Cardiac septum (tissue), 1 donor: ENCODE measurements at regions of chr5 and their contacts with region 1.

Region 1: GRCh38 chr5:95846554-95847260 is 24.2 kb upstream of the GLRX start:
- DNase-seq: no peak

Region 2: GRCh38 chr5:95554647-95555548 is 291.8 kb before region 1 on chr5 and contains the starts of genes ARSK and SKIC3:
- intact Hi-C with region 1: loop called (anchors 5 kb)
- DNase-seq: peak; percentile 96
- total RNA-seq, gene ARSK: 2.2 TPM
- total RNA-seq, gene SKIC3: 70.7 TPM

Region 3: DNA sequence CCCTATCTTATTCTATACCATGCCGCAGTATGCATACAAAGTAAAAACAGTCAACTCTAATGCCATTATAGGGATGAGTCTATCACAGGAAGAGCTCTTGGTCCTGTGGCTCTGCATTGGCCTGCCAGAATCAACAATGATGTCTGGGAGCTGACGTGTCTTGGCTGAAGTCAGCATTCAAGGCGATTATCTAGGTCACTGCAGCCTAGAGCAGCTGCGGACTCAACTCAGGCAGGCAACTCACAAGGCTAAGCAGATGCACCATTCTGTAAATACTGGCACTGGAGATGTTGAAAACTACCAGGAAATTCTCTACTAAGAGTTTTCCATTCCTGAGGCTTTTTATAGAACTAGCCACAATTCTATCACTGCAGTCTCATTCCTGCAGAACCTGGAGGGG is 177.2 kb before region 1 on chr5:
- intact Hi-C with region 1: loop called (anchors 5 kb)
- DNase-seq: peak; percentile 80

Region 4: GRCh38 chr5:95730730-95731570 is 115.8 kb before region 1 on chr5 and contains the start of gene RHOBTB3:
- intact Hi-C with region 1: loop called (anchors 5 kb)
- DNase-seq: peak; percentile 93
- total RNA-seq, gene RHOBTB3: 79.0 TPM

Region 5: DNA sequence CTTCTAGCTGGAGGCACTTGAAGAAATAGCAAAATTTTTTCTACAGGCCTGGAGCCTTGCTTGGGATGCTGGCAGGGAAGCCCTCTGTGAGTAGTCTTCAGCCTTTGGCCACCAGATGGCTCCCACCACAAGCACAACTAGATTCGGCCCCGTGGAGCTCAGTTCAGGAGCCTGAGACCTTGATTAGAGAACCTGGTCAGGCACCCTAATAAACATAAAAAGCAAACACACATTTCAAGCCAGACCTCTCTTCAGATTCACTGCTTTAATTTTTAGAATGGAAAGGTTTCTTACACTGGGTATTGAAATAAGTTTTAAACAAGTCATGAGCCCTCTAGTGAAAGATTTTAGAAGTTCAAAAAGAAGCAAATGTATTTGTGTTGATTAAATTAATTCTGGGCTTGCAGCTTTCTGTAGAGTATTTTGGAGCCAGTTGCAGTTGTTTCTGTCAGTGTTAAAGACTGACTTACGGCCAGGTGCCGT is 65.6 kb before region 1 on chr5:
- intact Hi-C with region 1: loop called (anchors 1 kb)
- DNase-seq: peak; percentile 91